ENCODE measurements at regions of chr2 and their contacts with region 1.

Region 1: GRCh38 chr2:74553892-74554645 is at the start of gene LOXL3:
- DNase-seq: peak; percentile 50 to 92
- H3K4me3 ChIP-seq: peak within 1 kb of the TSS; percentile 69 to 75
- H3K27ac ChIP-seq: peak within 1 kb of the TSS; percentile 90 to 94
- H3K4me1 ChIP-seq: peaks cover 6 to 20% of the 10 kb centered on the region in 2 donors
- H3K27me3 ChIP-seq: no peaks in the 10 kb centered on the region
- CTCF ChIP-seq: peak in 1 of 3 experiments; percentile 9
- total RNA-seq, gene LOXL3: 19.8 TPM

Region 2: DNA sequence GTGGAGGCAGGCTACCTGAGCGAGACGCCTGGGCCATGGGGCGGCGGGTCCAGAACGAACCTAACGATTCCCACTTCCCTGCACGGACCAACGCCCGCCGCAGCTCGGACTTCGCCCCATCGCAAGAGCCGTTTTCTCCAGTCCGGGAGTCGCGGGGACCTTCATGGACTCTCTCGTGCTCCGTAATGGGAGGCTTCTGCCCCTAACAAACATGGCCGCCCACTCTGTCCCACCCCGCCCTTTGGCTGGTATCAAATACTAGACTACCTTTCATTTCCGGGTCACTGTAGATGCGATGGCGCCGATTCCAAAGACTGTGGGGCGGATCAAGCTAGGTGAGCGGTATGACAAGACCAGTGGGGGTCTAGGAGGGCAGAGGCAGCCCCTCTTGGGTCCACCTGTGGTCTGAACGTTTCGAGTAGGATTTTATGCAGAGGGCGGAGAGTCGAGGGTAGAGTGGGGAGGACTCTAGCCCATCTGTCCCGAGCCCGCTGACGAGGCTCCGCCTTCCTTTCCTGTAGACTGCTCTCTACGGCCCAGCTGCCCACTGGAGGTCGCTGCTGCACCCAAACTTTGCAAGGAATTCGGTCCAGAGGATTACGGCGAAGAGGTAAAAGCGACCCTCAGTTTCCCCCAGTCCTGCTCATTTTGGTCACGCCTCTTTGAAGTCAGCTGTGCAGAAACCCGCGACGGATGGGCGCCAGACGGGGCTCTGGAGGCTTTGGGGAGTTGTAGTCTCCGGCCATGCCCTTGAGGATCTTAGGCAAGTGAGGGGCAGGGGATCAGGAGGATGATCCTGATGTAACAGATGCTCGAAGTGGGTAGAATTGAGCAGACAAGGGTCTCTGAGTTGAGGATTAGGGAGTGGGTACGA is 71.0 kb before region 1 on chr2 and contains the starts of genes CCDC142 and TTC31:
- intact Hi-C with region 1: loop called (anchors 1 kb)
- DNase-seq: peak; percentile 92 to 99
- H3K4me3 ChIP-seq: peak within 1 kb of the TSS; percentile 80 to 85
- H3K27ac ChIP-seq: peak within 1 kb of the TSS; percentile 85 to 90
- H3K4me1 ChIP-seq: peaks cover 9 to 21% of the 10 kb centered on the region in 2 donors
- H3K27me3 ChIP-seq: no peaks in the 10 kb centered on the region
- CTCF ChIP-seq: peak; percentile 83 to 91 (median 86)
- total RNA-seq, gene CCDC142: 16.5 TPM
- total RNA-seq, gene TTC31: 19.5 TPM

Region 3: GRCh38 chr2:74507145-74507925 is 46.7 kb before region 1 on chr2 and contains the start of gene PCGF1:
- intact Hi-C with region 1: loop called (anchors 1 kb)
- DNase-seq: peak; percentile 97 to 99
- H3K4me3 ChIP-seq: peak within 1 kb of the TSS; percentile 76 to 78
- H3K27ac ChIP-seq: peak within 1 kb of the TSS; percentile 99
- H3K4me1 ChIP-seq: peaks cover 3 to 24% of the 10 kb centered on the region in 2 donors
- H3K27me3 ChIP-seq: no peaks in the 10 kb centered on the region
- CTCF ChIP-seq: peak in 2 of 3 experiments; percentile 19 to 27
- total RNA-seq, gene PCGF1: not detected

Region 4: DNA sequence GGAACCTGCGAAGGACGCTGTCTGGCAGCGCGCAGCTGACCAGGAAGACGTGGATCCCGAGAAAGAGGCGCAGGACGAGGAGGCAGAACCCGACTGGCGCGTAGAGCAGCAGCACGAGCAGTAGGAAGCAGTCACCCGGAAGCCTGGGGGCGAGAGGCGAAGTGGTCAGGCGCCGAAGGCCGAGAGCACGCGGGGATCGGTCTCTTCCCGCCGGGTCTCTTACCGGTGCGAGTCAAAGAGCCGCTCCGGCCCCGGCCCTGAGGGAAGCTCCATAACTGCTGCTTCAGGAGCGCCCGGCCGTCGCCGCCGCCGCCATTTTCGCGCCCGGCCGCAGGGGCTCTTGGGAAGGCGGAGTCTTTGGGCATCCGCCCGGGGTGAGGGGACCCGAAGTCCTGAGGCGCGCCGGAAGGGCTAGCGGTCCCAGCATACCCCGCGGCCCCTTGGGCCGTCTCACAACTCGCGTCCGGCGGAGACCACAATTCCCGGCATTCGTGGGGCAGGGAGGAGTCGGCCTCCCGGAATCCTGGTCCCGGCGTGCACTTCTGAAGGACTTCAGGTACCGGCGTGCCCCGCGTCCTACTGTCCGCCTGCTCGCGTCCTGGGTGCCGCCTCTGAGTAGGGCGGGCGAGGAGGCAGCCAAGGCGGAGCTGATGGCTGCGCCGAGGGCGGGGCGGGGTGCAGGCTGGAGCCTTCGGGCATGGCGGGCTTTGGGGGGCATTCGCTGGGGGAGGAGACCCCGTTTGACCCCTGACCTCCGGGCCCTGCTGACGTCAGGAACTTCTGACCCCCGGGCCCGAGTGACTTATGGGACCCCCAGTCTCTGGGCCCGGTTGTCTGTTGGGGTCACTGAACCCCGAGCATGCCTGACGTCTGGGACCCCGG is 24.5 kb before region 1 on chr2 and contains the starts of genes AUP1 and HTRA2:
- intact Hi-C with region 1: loop called (anchors 1 kb)
- DNase-seq: peak; percentile 95 to 99
- H3K4me3 ChIP-seq: peak within 1 kb of the TSS; percentile 78 to 85
- H3K27ac ChIP-seq: peak within 1 kb of the TSS; percentile 84 to 88
- H3K4me1 ChIP-seq: peaks cover 13 to 21% of the 10 kb centered on the region in 2 donors
- H3K27me3 ChIP-seq: no peaks in the 10 kb centered on the region
- CTCF ChIP-seq: peak in 1 of 3 experiments; percentile 18
- total RNA-seq, gene AUP1: 120 TPM
- total RNA-seq, gene HTRA2: 80.1 TPM

Region 5: DNA sequence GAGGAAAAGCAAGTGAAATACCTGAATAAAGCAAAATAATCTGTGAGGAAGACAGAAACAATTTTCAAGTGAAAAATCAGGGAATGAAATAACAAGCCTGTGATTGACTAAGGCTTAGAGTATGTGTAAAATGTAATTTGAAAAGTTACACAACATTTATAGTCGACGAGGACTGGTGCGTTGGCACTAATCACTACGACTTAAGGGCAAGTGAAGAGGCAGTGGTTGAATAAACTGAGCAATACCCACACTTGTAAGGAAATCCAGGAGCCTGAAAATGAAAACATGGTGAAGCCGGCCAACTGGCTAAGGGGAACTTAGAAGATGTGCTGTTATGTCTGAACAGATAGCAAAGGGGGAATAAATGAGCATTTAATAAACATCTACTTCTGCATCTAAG is 13.8 kb after region 1 on chr2:
- intact Hi-C with region 1: loop called (anchors 2 kb)
- DNase-seq: no peak
- H3K4me3 ChIP-seq: no peak overlapping the region
- H3K27ac ChIP-seq: no peak overlapping the region
- H3K4me1 ChIP-seq: peaks cover 0 to 14% of the 10 kb centered on the region in 2 donors
- H3K27me3 ChIP-seq: no peaks in the 10 kb centered on the region
- CTCF ChIP-seq: no peak

Region 6: GRCh38 chr2:74587664-74588277 is 33.7 kb after region 1 on chr2:
- intact Hi-C with region 1: loop called (anchors 2 kb)
- DNase-seq: peak in 1 of 2 donors; percentile 84
- H3K4me3 ChIP-seq: no peak overlapping the region
- H3K27ac ChIP-seq: no peak overlapping the region
- H3K4me1 ChIP-seq: peaks cover 0 to 19% of the 10 kb centered on the region in 2 donors
- H3K27me3 ChIP-seq: no peaks in the 10 kb centered on the region
- CTCF ChIP-seq: peak; percentile 63 to 71 (median 65)